Right cardiac atrium (tissue), 5 donors: ENCODE measurements at regions of chr2 and their contacts with region 1.

Region 1: DNA sequence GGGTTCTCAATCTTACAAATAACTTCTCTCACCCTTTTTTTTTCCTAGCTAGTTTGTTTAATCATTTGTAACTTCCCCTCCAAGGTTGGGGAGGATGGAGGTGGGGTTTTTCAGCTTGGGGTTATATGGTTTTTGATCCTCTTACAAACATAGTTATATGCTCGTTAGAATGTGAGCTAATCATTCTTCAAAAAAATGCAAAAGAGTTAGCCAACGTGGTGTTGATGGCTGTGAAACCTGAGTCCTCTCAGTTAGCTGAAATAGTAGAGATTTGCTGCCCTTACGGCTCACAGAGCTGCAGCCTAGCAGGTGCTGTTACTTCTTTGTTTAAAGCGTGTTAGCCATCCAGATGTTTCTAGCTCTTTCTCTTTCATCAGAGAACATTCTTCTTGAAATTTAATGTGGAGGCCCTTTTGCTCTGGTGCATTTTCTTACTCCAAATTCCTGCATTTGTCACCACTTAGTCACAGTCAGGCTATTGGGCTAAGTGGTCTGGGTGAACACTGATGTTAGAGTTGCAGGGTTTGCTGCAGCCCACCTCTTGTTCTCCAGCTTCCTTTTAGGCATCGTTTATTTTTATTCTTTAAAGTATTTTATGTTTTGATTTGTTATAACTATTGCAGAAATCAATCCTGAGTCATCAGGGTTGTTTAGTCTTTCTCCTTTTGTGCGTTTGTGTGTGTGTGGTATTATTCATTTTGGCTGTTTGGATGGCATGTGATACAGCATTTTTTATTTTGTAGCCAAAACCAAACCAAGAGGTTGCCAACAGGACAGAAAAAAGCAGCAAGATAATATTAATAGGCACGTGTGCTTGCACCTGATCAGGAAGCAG is 41.1 kb downstream of the LIMS1 start:
- DNase-seq: no peak
- ATAC-seq: no peak
- H3K4me3 ChIP-seq: no peak overlapping the region
- H3K27ac ChIP-seq: no peak overlapping the region
- H3K4me1 ChIP-seq: peaks cover 9% of the 10 kb centered on the region
- H3K27me3 ChIP-seq: no peaks in the 10 kb centered on the region

Region 2: GRCh38 chr2:108169982-108170625 is 405.2 kb before region 1 on chr2:
- intact Hi-C with region 1: no loop called
- DNase-seq: no peak
- ATAC-seq: no peak
- H3K4me3 ChIP-seq: no peak overlapping the region
- H3K27ac ChIP-seq: no peak overlapping the region
- H3K4me1 ChIP-seq: no peaks in the 10 kb centered on the region
- H3K27me3 ChIP-seq: no peaks in the 10 kb centered on the region

Region 3: DNA sequence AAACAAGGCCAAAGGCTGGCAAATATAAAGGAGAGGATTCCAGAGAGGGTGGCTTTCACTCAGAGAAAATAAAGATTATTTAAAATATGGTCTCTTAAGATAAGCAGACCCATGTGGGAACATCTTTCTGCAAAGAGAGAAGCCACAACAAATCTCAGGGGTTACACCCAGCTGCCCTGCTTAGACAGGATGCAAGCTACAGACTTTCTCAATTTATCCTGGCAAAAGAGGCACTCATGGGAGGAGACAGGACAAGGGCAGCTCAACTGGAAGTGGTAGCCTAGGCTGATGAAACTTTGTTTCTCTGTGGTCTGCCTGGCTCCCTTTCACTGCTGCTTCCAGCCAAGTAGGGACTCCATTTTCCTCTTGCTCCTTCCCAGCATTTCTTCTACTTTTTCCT is 223.5 kb before region 1 on chr2:
- intact Hi-C with region 1: loop called in 3 of 4 experiments (anchors 5 to 10 kb)
- DNase-seq: no peak
- ATAC-seq: peak in 1 of 2 donors; percentile 88
- H3K4me3 ChIP-seq: no peak overlapping the region
- H3K27ac ChIP-seq: no peak overlapping the region
- H3K4me1 ChIP-seq: no peaks in the 10 kb centered on the region
- H3K27me3 ChIP-seq: no peaks in the 10 kb centered on the region

Region 4: DNA sequence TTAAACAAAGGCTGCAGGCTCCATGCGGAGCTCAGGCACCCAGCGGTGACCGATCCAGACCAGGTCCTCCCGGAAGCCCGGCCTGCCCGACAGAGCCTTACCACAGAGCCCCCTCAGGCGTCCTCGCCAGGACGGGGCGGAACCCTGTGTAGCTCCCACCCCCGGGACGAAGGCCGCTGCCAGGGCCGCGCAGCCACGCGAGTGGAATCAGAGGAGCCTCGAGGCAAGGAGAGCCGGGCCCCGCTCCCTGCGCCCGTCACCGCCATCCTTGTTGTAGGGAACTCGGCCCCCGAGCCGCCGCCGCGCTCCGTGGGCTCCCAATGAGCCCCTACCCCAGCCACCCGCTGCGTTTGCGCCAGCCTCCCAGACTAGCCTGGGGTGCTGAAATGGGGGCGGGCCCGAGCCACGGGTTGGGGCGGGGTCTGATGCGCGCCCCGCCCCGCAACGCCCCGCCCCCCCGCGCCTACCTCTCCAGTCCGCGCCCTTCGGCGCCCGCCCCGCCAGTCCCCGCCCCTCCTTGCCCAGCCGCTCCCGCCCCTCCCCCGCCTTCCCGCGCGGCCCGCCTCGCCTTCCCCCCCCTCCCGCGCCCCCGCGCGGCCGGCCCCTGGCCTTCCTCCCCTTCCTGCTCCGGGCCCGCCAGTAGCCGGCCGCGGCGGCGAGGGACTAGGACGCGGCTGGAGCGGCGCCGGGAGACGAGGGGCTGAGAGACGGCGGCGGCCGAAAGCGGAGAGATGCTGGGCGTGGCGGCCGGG is 41.3 kb before region 1 on chr2 and contains the start of gene LIMS1:
- intact Hi-C with region 1: loop called in 3 of 4 experiments (anchors 5 to 10 kb)
- DNase-seq: peak; percentile 93 to 97 (median 97)
- ATAC-seq: peak; percentile 97 to 98
- H3K4me3 ChIP-seq: peak within 1 kb of the TSS; percentile 99
- H3K27ac ChIP-seq: peak within 1 kb of the TSS; percentile 90
- H3K4me1 ChIP-seq: peaks cover 3% of the 10 kb centered on the region
- H3K27me3 ChIP-seq: no peaks in the 10 kb centered on the region
- total RNA-seq, gene LIMS1: 45.5 to 65.6 (median 55.9) TPM

Region 5: GRCh38 chr2:108825254-108825653 is 249.9 kb after region 1 on chr2:
- intact Hi-C with region 1: no loop called
- DNase-seq: no peak
- ATAC-seq: peak; percentile 71 to 85
- H3K4me3 ChIP-seq: no peak overlapping the region
- H3K27ac ChIP-seq: no peak overlapping the region
- H3K4me1 ChIP-seq: no peaks in the 10 kb centered on the region
- H3K27me3 ChIP-seq: no peaks in the 10 kb centered on the region

Region 6: DNA sequence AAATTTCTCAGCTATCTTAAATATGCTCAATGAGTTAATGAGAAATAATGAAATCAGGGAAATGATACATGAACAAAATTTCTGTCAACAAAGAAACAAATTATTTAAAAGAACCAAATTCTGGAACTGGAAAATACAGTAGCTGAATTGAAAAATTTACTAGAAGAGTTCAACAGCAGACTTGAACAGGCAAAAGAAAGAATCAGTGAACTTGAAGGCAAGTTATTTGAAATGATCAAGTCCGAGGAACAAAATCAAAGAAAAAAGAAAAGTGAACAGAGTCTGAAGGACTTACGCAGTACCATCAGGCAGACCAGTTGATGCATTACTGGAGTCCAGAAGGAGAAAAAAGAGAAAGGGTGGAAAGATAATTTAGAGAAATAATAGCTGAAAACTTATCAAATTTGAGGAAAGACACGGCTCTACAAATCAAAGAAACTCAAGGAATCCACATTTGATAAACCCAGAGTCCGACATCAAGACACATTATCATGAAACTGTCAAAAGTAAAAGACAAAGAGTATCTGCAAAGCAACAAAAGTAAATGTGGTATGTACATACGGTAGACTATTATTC is 294.8 kb after region 1 on chr2:
- intact Hi-C with region 1: no loop called
- DNase-seq: no peak
- ATAC-seq: no peak
- H3K4me3 ChIP-seq: no peak overlapping the region
- H3K27ac ChIP-seq: no peak overlapping the region
- H3K4me1 ChIP-seq: no peaks in the 10 kb centered on the region
- H3K27me3 ChIP-seq: no peaks in the 10 kb centered on the region

Region 7: GRCh38 chr2:109209412-109209811 is 634.1 kb after region 1 on chr2:
- intact Hi-C with region 1: no loop called
- DNase-seq: no peak
- ATAC-seq: peak; percentile 60 to 86
- H3K4me3 ChIP-seq: no peak overlapping the region
- H3K27ac ChIP-seq: peak overlapping the region; percentile 24
- H3K4me1 ChIP-seq: peaks cover 18% of the 10 kb centered on the region
- H3K27me3 ChIP-seq: no peaks in the 10 kb centered on the region